ENCODE measurements at regions of chr17 and their contacts with region 1.

Region 1: DNA sequence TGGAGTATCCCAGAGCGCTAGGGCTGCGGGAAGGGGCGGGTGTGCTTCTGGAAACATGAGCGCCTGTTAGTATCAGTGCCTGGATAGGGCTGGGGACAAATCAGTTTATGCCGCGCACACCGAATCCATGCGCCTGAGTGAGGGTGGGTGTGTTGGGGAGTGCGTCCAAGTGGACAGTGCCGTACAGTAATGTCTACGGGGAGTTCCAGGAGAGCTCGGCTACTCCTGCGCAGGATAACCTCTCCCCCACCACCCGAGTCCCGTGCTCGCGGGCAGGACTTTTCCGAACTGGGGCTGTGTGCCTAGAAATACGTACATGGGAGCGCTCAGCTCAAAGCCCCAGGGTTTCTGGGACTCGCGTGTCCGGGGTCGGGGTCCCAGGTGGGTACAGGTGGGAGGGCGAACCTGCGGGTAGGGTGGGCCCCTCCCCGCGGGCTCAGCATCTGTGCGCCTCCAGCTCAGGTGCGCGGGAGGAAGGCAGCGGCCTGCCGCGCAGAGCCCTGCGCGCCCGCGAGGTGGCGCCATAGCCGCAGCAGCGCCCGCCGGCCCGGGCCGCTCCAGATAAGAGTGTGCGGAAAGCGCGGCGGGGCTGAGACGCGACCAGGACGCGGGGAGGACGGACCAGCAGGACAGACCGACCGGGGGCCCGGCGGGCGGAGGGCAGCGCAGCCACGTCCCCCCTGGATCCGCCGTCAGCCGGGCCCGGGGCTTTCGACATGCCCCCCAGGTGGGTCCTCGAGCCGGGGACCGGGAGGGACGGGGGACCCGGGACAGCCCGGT is at the start of gene HIC1:
- DNase-seq: no peak
- ATAC-seq: peak; percentile 70
- H3K4me3 ChIP-seq: peak within 1 kb of the TSS; percentile 95
- H3K27ac ChIP-seq: peak within 1 kb of the TSS; percentile 84
- H3K4me1 ChIP-seq: peaks cover 14% of the 10 kb centered on the region
- H3K27me3 ChIP-seq: peaks cover 2% of the 10 kb centered on the region in 2 experiments; a peak in 3 of 4 replicates
- CTCF ChIP-seq: peak; percentile 74 to 96 (median 88); a peak in 5 of 6 replicates
- EP300 ChIP-seq: 0 out of 4 replicates have a peak, but pooled peaks of 1 of the 2 experiments have one; percentile 8
- POLR2A ChIP-seq: peak; percentile 94
- RAD21 ChIP-seq: peak; percentile 87
- polyA plus RNA-seq, gene HIC1: 0.11 to 0.57 TPM

Region 2: DNA sequence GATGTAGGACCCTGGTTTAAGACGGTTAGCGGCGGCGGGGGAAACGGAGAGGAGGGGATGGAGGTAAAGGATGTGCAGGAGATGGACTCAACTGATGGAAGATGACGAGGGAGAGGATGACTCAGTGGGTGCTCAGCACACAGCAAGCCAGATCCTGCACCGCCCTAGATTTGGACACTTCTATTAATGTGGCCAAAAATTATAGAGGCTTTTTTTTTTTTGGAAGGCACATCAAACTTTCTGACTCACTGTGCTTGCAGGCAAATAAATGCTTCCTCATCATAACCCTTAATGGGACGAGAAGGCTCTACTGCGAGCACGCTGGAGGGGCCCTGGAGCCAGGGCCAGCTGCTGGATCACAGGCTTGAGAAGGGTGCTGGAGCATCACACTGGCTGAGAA is 65.6 kb before region 1 on chr17:
- CTCF ChIA-PET with region 1: no interaction called
- POLR2A ChIA-PET with region 1: no interaction called
- RAD21 ChIA-PET with region 1: no interaction called
- SMC1A ChIA-PET with region 1: no interaction called
- in situ Hi-C with region 1: no loop called
- intact Hi-C with region 1: no loop called
- DNase-seq: no peak
- ATAC-seq: no peak
- H3K4me3 ChIP-seq: no peak overlapping the region
- H3K27ac ChIP-seq: no peak overlapping the region
- H3K4me1 ChIP-seq: no peaks in the 10 kb centered on the region
- H3K27me3 ChIP-seq: no peaks in the 10 kb centered on the region; a peak in 2 of 4 replicates
- CTCF ChIP-seq: no peak
- EP300 ChIP-seq: no peak
- POLR2A ChIP-seq: no peak
- RAD21 ChIP-seq: no peak

Region 3: GRCh38 chr17:2011411-2012371 is 43.0 kb before region 1 on chr17:
- CTCF ChIA-PET with region 1: no interaction called
- POLR2A ChIA-PET with region 1: no interaction called
- RAD21 ChIA-PET with region 1: no interaction called
- SMC1A ChIA-PET with region 1: no interaction called
- in situ Hi-C with region 1: no loop called
- intact Hi-C with region 1: no loop called
- DNase-seq: no peak
- ATAC-seq: no peak
- H3K4me3 ChIP-seq: no peak overlapping the region
- H3K27ac ChIP-seq: no peak overlapping the region
- H3K4me1 ChIP-seq: no peaks in the 10 kb centered on the region
- H3K27me3 ChIP-seq: no peaks in the 10 kb centered on the region; a peak in 1 of 4 replicates
- CTCF ChIP-seq: no peak
- EP300 ChIP-seq: no peak
- POLR2A ChIP-seq: no peak
- RAD21 ChIP-seq: no peak

Region 4: DNA sequence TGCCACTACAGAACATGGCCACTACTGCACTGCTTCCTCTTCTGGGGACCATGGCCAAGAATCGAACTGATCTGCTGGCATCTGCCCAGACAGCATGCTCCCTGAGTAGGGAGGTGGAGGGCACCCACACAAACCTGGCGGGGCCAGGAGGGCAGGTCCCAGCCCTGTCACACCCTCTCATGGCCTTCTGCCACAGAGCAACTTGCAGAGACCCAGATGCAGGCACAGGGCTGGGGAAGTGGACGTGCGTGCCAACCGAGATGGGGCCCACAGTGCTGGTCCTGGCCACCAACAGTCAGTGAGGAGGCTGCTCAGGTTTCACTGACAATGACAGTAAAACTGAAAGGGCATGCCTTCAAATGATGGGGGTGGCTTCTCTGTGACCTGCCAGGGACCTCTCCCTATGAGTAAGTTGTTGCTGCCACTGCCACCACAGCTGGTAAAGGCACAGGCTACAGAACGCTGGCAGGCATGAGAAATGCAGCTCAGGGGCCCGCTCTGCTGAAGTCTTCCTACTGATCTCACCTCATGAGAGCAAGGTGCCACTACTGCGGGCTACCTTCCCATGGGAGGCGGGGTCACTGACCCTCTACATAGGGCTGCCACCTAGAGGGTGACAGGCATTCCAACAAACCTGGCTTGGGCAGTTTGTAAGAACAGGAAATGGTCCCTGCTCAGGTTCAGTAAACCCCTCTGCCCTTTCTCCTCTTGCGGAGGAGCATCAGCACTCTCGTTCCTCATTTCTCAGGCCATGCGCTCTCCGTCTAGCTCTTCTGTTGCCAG is 15.7 kb after region 1 on chr17:
- CTCF ChIA-PET with region 1: interaction called, 77 read pairs
- POLR2A ChIA-PET with region 1: interaction called, 7 read pairs
- RAD21 ChIA-PET with region 1: interaction called, 21 read pairs
- SMC1A ChIA-PET with region 1: interaction called, 24 read pairs
- in situ Hi-C with region 1: no loop called
- intact Hi-C with region 1: no loop called
- DNase-seq: peak; percentile 96
- ATAC-seq: peak; percentile 93
- H3K4me3 ChIP-seq: peak overlapping the region; percentile 1; the same call in 1 of the 2 replicates
- H3K27ac ChIP-seq: peak overlapping the region; percentile 95
- H3K4me1 ChIP-seq: peaks cover 43% of the 10 kb centered on the region
- H3K27me3 ChIP-seq: no peaks in the 10 kb centered on the region
- CTCF ChIP-seq: peak in 2 of 3 experiments; percentile 7 to 22; a peak in 1 of 6 replicates
- EP300 ChIP-seq: peak; percentile 96 to 99
- POLR2A ChIP-seq: peak; percentile 79
- RAD21 ChIP-seq: 0 out of 2 replicates have a peak, but pooled peaks have one; percentile 0

Region 5: GRCh38 chr17:2137342-2138098 is 82.8 kb after region 1 on chr17:
- CTCF ChIA-PET with region 1: interaction called, 20 read pairs
- POLR2A ChIA-PET with region 1: interaction called, 5 read pairs
- RAD21 ChIA-PET with region 1: interaction called, 26 read pairs
- SMC1A ChIA-PET with region 1: interaction called, 6 read pairs
- in situ Hi-C with region 1: no loop called
- intact Hi-C with region 1: no loop called
- DNase-seq: peak; percentile 51
- ATAC-seq: peak; percentile 86
- H3K4me3 ChIP-seq: no peak overlapping the region; the same call in 1 of the 2 replicates
- H3K27ac ChIP-seq: peak overlapping the region; percentile 87
- H3K4me1 ChIP-seq: peaks cover 41% of the 10 kb centered on the region
- H3K27me3 ChIP-seq: no peaks in the 10 kb centered on the region
- CTCF ChIP-seq: no peak
- EP300 ChIP-seq: no peak
- POLR2A ChIP-seq: peak; percentile 23; the same call in 1 of the 2 replicates
- RAD21 ChIP-seq: no peak

Region 6: DNA sequence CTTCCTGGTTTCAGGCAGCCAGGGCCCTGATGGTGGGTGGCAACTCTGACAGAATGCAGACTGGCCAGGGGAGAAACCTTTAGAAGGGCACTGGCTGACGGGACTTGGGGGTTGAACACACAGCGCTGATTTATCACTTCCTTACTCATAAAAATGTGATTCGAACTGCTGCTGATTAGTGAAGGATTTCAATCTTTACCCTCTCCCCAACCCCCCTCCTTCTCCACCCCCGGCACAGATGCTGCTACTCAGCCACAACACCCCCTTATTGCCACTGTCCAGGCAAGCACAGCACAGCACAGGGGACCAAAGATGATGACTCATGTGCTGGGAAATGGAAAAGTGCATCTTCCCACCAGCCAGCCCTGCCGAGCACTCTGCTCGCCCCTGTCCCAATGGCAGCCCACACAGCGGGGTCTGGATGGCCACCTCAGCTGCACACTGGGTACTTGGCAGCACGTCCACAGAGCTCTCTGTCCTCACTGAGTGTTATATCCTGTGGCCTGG is 178.8 kb after region 1 on chr17:
- CTCF ChIA-PET with region 1: interaction called, 32 read pairs
- POLR2A ChIA-PET with region 1: interaction called, 5 read pairs
- RAD21 ChIA-PET with region 1: interaction called, 9 read pairs
- SMC1A ChIA-PET with region 1: interaction called, 10 read pairs
- in situ Hi-C with region 1: no loop called
- intact Hi-C with region 1: no loop called
- DNase-seq: no peak
- ATAC-seq: no peak
- H3K4me3 ChIP-seq: no peak overlapping the region
- H3K27ac ChIP-seq: no peak overlapping the region
- H3K4me1 ChIP-seq: peaks cover 43% of the 10 kb centered on the region
- H3K27me3 ChIP-seq: no peaks in the 10 kb centered on the region
- CTCF ChIP-seq: no peak
- EP300 ChIP-seq: no peak
- POLR2A ChIP-seq: no peak
- RAD21 ChIP-seq: no peak

Region 7: GRCh38 chr17:2266045-2266864 is 211.6 kb after region 1 on chr17:
- CTCF ChIA-PET with region 1: interaction called, 16 read pairs
- POLR2A ChIA-PET with region 1: interaction called, 7 read pairs
- RAD21 ChIA-PET with region 1: interaction called, 34 read pairs
- SMC1A ChIA-PET with region 1: interaction called, 9 read pairs
- in situ Hi-C with region 1: no loop called
- intact Hi-C with region 1: no loop called
- DNase-seq: peak; percentile 97
- ATAC-seq: peak; percentile 90
- H3K4me3 ChIP-seq: peak overlapping the region; percentile 28; the same call in 1 of the 2 replicates
- H3K27ac ChIP-seq: peak overlapping the region; percentile 99
- H3K4me1 ChIP-seq: peaks cover 61% of the 10 kb centered on the region
- H3K27me3 ChIP-seq: no peaks in the 10 kb centered on the region
- CTCF ChIP-seq: no peak
- EP300 ChIP-seq: peak; percentile 58 to 87; a peak in 3 of 4 replicates
- POLR2A ChIP-seq: peak; percentile 64
- RAD21 ChIP-seq: peak; percentile 16; the same call in 1 of the 2 replicates

Region 8: DNA sequence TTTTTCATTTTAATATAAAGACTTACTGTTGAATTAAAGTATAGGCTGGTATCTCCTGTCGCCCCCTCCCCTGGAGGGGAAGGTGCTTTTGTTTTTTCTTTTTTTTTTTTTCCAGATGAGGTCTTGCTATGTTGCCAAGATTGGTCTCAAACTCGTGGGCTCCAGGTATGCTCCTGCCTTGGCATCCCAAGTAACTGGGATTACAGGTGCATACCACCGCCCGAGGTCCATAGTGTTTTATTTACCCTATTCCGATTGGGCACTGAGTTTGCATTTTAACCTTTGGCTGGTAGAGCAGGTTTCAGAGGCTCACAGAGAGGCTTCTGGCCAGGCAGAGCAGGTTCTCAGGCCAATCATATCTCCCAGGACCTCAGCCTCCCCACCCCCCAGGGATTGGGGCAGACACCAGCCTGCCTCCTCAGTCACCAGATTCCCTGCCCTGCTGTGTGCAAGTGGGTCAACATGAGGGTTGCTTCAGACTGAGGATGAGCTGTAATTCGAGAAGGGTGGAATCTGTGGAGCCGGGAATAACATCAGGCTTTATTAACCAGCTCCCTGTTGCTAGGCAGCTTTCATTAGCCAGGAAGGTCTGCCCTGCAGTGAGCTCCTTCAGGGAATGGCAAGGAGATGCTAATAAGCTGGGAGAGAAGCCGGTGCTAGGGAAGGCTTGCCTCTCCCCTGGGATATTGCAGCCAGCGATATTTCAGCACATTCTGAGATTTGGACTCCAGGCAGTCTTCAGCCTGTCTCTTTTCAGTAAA is 293.0 kb after region 1 on chr17:
- CTCF ChIA-PET with region 1: interaction called, 5 read pairs
- POLR2A ChIA-PET with region 1: no interaction called
- RAD21 ChIA-PET with region 1: interaction called, 12 read pairs
- SMC1A ChIA-PET with region 1: no interaction called
- in situ Hi-C with region 1: loop called (anchors 5 kb)
- intact Hi-C with region 1: loop called (anchors 2 kb)
- DNase-seq: no peak
- ATAC-seq: no peak
- H3K4me3 ChIP-seq: no peak overlapping the region
- H3K27ac ChIP-seq: no peak overlapping the region
- H3K4me1 ChIP-seq: no peaks in the 10 kb centered on the region
- H3K27me3 ChIP-seq: no peaks in the 10 kb centered on the region
- CTCF ChIP-seq: no peak
- EP300 ChIP-seq: no peak
- POLR2A ChIP-seq: no peak
- RAD21 ChIP-seq: no peak

Measured in GM12878 (cell line).